ENCODE measurements at regions of chr20 and their contacts with region 1.

Region 1: GRCh38 chr20:44747166-44748004 is 1.7 kb downstream of the KCNK15 start:
- DNase-seq: no peak
- ATAC-seq: peak; percentile 81
- H3K4me3 ChIP-seq: no peak overlapping the region
- H3K27ac ChIP-seq: no peak overlapping the region
- H3K4me1 ChIP-seq: no peaks in the 10 kb centered on the region
- H3K27me3 ChIP-seq: peaks cover 13 to 16% of the 10 kb centered on the region in 2 experiments
- CTCF ChIP-seq: peak; percentile 66 to 78 (median 73)
- EP300 ChIP-seq: no peak
- POLR2A ChIP-seq: no peak
- RAD21 ChIP-seq: peak; percentile 49

Region 2: DNA sequence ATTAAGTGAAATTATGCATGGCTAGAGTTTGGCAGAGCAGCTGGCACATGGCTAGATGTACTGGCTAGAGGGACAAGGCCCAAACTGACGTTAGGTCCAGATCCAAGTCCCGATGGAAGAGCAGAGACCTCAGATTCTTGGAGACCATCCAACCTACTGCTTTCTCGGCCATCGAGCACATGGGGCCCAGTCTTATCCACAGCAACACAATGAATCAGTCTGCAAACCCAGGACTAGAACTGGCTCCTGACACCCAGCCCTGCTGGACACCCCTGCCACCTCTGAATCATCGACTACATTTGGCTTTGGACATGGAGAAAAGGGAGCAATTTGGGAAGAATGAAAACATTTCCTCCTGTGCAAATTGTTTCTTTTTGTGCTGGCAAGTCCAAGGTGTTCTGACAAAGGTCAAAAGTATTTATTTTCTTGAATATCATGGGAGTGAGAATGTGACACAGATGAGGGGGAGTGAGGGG is 114.2 kb after region 1 on chr20:
- CTCF ChIA-PET with region 1: interaction called, 27 read pairs
- POLR2A ChIA-PET with region 1: no interaction called
- RAD21 ChIA-PET with region 1: interaction called, 6 read pairs
- SMC1A ChIA-PET with region 1: interaction called, 13 read pairs
- in situ Hi-C with region 1: loop called (anchors 10 kb)
- intact Hi-C with region 1: no loop called
- DNase-seq: no peak
- ATAC-seq: no peak
- H3K4me3 ChIP-seq: no peak overlapping the region
- H3K27ac ChIP-seq: no peak overlapping the region
- H3K4me1 ChIP-seq: no peaks in the 10 kb centered on the region
- H3K27me3 ChIP-seq: no peaks in the 10 kb centered on the region
- CTCF ChIP-seq: no peak
- EP300 ChIP-seq: no peak
- POLR2A ChIP-seq: no peak
- RAD21 ChIP-seq: no peak

Region 3: GRCh38 chr20:44866703-44867335 is 119.4 kb after region 1 on chr20:
- CTCF ChIA-PET with region 1: interaction called, 27 read pairs
- POLR2A ChIA-PET with region 1: no interaction called
- RAD21 ChIA-PET with region 1: interaction called, 6 read pairs
- SMC1A ChIA-PET with region 1: interaction called, 13 read pairs
- in situ Hi-C with region 1: loop called (anchors 10 kb)
- intact Hi-C with region 1: loop called (anchors 1 kb)
- DNase-seq: no peak
- ATAC-seq: peak; percentile 29; the same call in 2 of the 3 replicates
- H3K4me3 ChIP-seq: no peak overlapping the region
- H3K27ac ChIP-seq: no peak overlapping the region
- H3K4me1 ChIP-seq: peaks cover 4% of the 10 kb centered on the region
- H3K27me3 ChIP-seq: peaks cover 0 to 3% of the 10 kb centered on the region in 2 experiments; a peak in 1 of 4 replicates
- CTCF ChIP-seq: no peak
- EP300 ChIP-seq: no peak
- POLR2A ChIP-seq: no peak
- RAD21 ChIP-seq: no peak

Region 4: DNA sequence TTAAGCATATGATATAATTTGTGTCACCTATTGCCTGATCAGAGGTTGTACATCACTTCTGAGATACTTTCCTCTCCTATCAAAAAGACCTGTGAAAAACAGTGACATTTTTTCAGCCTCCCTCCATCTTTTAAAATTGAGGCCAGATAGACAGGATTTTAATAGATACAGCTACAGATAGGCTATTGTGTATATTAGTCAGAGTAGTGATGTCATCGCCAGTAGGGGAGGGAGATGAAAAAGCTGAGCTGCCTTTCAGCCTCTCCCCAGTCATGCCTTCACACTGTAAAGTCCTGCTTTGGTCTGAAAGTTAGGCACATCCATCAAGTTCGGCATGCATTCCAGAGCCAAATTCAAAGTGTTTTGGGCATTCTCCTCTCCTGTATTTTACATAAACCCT is 154.6 kb after region 1 on chr20:
- CTCF ChIA-PET with region 1: no interaction called
- POLR2A ChIA-PET with region 1: no interaction called
- RAD21 ChIA-PET with region 1: no interaction called
- SMC1A ChIA-PET with region 1: no interaction called
- in situ Hi-C with region 1: no loop called
- intact Hi-C with region 1: no loop called
- DNase-seq: no peak
- ATAC-seq: 0 out of 3 replicates have a peak, but pooled peaks have one; percentile 20
- H3K4me3 ChIP-seq: no peak overlapping the region
- H3K27ac ChIP-seq: no peak overlapping the region
- H3K4me1 ChIP-seq: peaks cover 14% of the 10 kb centered on the region
- H3K27me3 ChIP-seq: no peaks in the 10 kb centered on the region
- CTCF ChIP-seq: no peak
- EP300 ChIP-seq: no peak
- POLR2A ChIP-seq: no peak
- RAD21 ChIP-seq: no peak

Measured in GM12878 (cell line).